CD14-positive monocyte (primary cell): ENCODE measurements at regions of chr18 and their contacts with region 1.

Region 1: DNA sequence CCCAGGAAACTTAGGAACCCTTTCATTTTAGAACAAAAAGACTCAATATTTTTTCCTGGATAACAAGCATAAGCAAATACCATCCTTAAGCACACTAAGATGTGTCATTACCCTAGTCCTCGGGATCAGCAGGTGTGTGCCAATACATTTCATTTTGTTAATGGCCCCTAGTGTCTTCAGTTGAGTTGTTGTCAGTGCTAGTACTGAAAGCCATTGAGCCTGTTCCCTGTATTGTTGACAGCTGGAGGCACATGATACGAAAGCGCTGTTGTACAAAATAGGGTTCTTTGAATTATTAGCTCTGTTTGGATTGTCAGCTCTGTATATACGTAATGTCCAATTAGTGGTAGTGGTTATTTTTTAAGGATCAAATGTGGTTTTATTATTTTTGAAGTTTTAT is 29.5 kb downstream of the VAPA start:
- DNase-seq: no peak
- H3K4me3 ChIP-seq: no peak overlapping the region
- H3K4me3 Mint-ChIP-seq: no peak overlapping the region
- H3K27ac ChIP-seq: no peak overlapping the region
- H3K27ac Mint-ChIP-seq: no peak overlapping the region
- H3K4me1 ChIP-seq: no peaks in the 10 kb centered on the region
- H3K4me1 Mint-ChIP-seq: no peaks in the 10 kb centered on the region
- H3K27me3 ChIP-seq: no peaks in the 10 kb centered on the region
- H3K27me3 Mint-ChIP-seq: peaks cover 0 to under 1% (median 0%) of the 10 kb centered on the region in 3 donors
- CTCF ChIP-seq: no peak

Region 2: DNA sequence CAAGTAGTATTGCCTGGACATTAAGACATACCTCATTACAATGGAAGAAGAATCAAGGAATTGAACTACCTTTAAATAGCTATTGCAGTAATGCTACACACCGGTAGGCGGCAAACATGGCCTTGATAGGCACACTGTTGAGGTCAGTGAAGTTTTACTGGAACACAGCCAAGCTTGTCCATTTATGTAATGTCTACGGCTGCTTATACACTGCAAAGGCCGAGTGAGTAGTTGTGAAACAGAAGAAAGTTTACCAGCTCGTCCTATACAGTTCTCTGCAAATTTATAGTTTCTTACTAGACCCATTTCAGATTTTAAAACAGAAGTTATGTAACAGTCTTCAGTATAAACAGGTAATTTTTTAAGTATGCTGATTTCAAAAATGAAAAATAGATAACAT is 367.8 kb before region 1 on chr18:
- intact Hi-C with region 1: loop called in 1 of 2 experiments (anchors 10 kb)
- DNase-seq: peak; percentile 72 to 93 (median 88)
- H3K4me3 ChIP-seq: no peak overlapping the region
- H3K4me3 Mint-ChIP-seq: no peak overlapping the region
- H3K27ac ChIP-seq: peak overlapping the region in 1 of 2 donors; percentile 27
- H3K27ac Mint-ChIP-seq: peak overlapping the region in 4 of 7 donors; percentile 13 to 70 (median 30)
- H3K4me1 ChIP-seq: peaks cover 0 to 5% of the 10 kb centered on the region in 2 donors
- H3K4me1 Mint-ChIP-seq: peaks cover 5% of the 10 kb centered on the region
- H3K27me3 ChIP-seq: no peaks in the 10 kb centered on the region
- H3K27me3 Mint-ChIP-seq: no peaks in the 10 kb centered on the region
- CTCF ChIP-seq: peak; percentile 81

Region 3: GRCh38 chr18:9604348-9604747 is 339.0 kb before region 1 on chr18:
- intact Hi-C with region 1: no loop called
- DNase-seq: no peak
- H3K4me3 ChIP-seq: no peak overlapping the region
- H3K4me3 Mint-ChIP-seq: no peak overlapping the region
- H3K27ac ChIP-seq: no peak overlapping the region
- H3K27ac Mint-ChIP-seq: peak overlapping the region in 3 of 7 donors; percentile 4 to 38 (median 23)
- H3K4me1 ChIP-seq: no peaks in the 10 kb centered on the region
- H3K4me1 Mint-ChIP-seq: peaks cover 18% of the 10 kb centered on the region
- H3K27me3 ChIP-seq: no peaks in the 10 kb centered on the region
- H3K27me3 Mint-ChIP-seq: no peaks in the 10 kb centered on the region
- CTCF ChIP-seq: no peak

Region 4: DNA sequence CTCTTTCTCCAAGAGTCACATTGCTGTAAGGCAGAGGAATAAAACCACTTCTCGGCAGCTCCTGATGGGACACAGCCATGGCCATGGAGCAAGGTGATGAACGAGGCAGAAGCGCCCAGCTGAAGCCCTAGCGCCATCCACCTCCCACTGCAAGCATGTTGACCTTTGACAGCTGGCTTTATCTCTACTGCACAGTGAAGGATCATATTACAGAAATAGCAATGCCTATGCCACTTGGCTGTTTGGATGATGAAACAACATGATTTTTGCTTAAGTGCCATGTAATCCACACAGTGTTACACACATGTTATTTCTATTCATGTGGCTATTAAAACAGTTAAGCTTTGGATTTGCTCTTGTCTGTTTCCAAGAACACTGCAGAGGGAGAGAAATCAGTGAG is 138.2 kb after region 1 on chr18:
- intact Hi-C with region 1: no loop called
- DNase-seq: no peak
- H3K4me3 ChIP-seq: no peak overlapping the region
- H3K4me3 Mint-ChIP-seq: no peak overlapping the region
- H3K27ac ChIP-seq: no peak overlapping the region
- H3K27ac Mint-ChIP-seq: no peak overlapping the region
- H3K4me1 ChIP-seq: peaks cover 0 to 4% of the 10 kb centered on the region in 2 donors
- H3K4me1 Mint-ChIP-seq: peaks cover 5% of the 10 kb centered on the region
- H3K27me3 ChIP-seq: no peaks in the 10 kb centered on the region
- H3K27me3 Mint-ChIP-seq: no peaks in the 10 kb centered on the region
- CTCF ChIP-seq: no peak